Astrocyte of the cerebellum (primary cell): ENCODE measurements at regions of chr5 and their contacts with region 1.

Region 1: DNA sequence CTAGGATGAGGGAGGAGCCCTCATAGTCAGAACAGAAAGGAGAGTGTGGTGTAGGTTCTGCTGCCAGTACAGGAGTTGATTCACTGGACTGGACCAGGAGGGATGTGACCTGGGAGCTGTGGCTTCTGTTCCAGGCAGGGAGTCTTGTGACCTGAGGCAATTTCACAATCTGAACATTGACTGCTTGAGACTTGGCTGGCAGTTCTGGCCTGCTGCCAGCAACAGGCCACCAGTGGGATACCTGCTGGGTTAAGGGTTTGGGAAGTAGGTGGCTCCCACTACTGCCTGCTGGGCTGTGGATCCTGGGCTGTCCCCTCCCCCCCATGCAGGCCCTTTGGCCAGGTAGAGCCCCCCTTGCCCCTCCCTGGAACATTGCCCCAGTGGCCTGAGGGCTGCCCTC is 268.6 kb upstream of the ARRDC3 start:
- DNase-seq: no peak
- H3K4me3 ChIP-seq: no peak overlapping the region
- CTCF ChIP-seq: no peak

Region 2: GRCh38 chr5:91383027-91383955 is 268.4 kb before region 1 on chr5 and contains the start of gene ARRDC3:
- in situ Hi-C with region 1: no loop called
- DNase-seq: peak; percentile 89
- H3K4me3 ChIP-seq: peak within 1 kb of the TSS; percentile 93
- CTCF ChIP-seq: no peak

Region 3: DNA sequence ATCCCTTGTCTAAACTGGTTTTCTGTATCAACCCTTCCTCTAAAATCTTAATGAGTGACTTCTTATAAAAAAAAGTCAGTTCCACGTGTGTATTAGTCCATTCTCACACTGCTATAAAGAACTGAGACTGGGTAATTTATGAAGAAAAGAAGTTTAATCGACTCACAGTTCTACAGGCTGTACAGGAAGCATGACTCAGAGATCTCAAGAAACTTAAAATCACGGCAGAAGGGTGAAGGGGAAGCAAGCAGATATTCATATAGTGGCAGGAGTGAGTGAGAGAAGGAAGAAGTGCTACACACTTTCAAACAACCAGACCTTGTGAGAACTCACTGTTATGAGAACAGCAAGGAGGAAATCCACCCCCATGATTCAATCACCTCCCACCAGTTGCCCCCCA is 39.2 kb after region 1 on chr5:
- in situ Hi-C with region 1: loop called (anchors 5 kb)
- DNase-seq: no peak
- H3K4me3 ChIP-seq: no peak overlapping the region
- CTCF ChIP-seq: no peak

Region 4: DNA sequence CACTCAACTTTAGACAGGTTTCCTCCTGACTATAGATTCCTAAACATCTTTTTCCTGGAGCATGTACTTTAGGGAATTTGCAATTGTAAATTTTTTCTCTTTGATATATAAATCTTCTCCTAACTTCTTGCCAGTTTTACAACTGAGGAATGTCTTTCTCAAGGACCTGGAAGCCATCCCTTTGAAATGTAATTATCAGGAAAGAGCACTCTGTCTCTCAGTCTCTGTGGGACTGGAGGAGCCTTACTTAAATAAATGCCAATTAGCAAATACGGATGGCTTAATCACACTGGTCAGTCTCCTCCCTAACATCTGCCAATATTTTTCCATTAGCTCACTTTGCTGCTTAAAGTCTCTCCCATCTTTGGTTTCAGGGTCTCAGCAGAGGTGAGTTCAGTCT is 75.8 kb after region 1 on chr5:
- in situ Hi-C with region 1: no loop called
- DNase-seq: no peak
- H3K4me3 ChIP-seq: no peak overlapping the region
- CTCF ChIP-seq: no peak